ENCODE measurements at regions of chr3 and their contacts with region 1.

Region 1: DNA sequence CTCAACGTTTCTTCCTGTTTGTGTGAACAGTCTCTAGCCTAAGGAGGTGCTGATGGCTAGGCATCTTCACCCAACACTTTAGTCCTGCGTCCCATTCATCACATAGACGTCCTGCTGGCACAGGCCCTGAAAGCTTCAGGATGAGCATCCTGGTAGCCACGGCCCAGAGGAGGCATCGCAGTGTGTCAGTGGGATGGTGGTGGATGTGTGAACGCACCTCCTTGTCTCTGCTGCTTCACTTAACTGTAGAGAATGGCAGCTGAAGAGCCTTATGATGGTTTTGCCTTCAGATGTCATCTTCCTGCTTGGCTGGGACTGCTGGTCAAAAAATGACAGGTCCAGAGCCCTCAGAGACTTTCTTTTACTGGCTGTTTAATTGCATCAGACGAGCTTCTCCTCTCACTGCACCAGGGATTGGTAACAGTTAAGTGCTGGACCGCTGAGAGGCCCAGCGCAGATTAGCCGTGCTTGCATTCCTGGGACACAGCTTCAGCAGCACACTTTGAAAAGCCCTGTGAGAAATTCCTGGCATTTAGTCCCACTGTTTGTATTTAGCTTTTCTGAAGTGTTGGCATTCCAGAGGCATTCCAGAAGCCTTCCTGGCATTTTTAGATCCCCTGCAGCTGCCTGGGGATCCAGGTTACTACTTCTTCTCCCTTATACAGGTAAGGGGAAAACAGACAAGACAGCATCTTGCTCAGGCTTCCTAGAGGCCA is 132.4 kb upstream of the PLXNA1 start:
- DNase-seq: no peak

Region 2: GRCh38 chr3:126752303-126752842 is 98.2 kb before region 1 on chr3:
- intact Hi-C with region 1: no loop called
- DNase-seq: no peak

Region 3: GRCh38 chr3:126782554-126782953 is 68.0 kb before region 1 on chr3:
- intact Hi-C with region 1: no loop called
- DNase-seq: no peak

Region 4: DNA sequence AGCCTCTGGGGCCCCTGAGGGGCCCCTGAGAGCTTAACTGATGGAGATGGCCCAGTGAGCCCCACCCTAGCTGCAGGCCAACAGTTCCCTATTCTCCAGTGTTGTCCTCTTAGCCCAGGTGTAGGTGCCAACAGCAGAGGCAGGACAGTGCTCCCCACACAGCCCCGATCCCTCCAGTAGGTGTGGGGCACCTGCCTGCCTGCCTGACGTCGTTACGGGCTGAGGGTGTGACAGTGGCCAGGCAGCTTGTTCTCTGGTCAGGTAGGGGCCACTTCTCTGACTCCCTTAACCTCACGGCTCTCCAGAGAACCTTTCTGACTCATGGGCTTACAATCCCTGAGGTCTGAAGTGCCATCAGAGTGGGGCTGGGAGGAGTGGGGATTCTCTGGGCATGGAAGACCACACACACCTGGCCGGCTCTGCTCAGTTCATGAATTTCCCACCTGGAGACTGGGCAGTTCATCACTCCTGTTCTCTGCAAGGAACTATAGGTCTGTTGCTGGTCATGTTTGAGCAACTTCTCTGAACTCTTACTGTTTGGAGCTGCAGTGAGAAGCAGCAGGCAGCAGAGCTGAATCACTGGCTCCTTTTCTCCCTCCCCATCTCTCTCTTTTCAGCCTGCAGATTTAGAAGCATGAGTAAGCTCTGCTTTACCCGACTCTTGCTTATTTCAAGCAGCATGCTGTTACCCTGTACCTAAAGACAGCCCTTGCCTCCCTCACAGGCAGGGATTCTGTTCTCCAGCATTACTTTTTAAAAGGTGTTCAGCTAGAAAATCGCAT is 15.2 kb before region 1 on chr3:
- intact Hi-C with region 1: no loop called
- DNase-seq: no peak

Region 5: GRCh38 chr3:126886217-126886616 is 35.7 kb after region 1 on chr3:
- intact Hi-C with region 1: no loop called
- DNase-seq: peak; percentile 6

Region 6: DNA sequence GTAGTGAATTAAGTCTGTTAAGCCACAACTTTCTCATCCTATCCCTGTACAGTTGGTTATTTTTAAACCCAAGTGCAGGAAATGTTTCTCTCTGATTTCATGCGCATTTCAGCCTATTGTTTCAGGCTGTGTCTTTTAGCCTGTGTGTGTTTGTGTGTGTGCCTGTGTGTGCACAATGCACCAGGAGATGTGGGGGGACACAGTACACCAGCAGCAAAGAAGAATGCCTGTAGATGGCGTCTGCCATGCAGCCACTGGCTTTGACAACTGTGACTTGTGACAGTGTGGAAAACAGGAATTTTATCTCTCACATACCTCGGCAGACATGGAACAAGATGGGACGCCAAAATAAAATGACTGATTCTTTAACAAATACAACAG is 88.8 kb after region 1 on chr3:
- intact Hi-C with region 1: loop called (anchors 5 kb)
- DNase-seq: no peak

Measured in cardiac septum (tissue), 1 donor.